Naive thymus-derived CD4-positive, alpha-beta T cell (primary cell): ENCODE measurements at regions of chr5 and their contacts with region 1.

Region 1: GRCh38 chr5:78886341-78887230 is 98.5 kb downstream of the ARSB start:
- DNase-seq: peak in 2 of 9 donors; percentile 6 to 7
- ATAC-seq: no peak
- H3K4me3 ChIP-seq: no peak overlapping the region
- H3K4me3 Mint-ChIP-seq: no peak overlapping the region
- H3K27ac ChIP-seq: no peak overlapping the region
- H3K27ac Mint-ChIP-seq: no peak overlapping the region
- H3K4me1 ChIP-seq: peaks cover 0 to 6% of the 10 kb centered on the region in 2 donors
- H3K4me1 Mint-ChIP-seq: peaks cover 3 to 21% (median 19%) of the 10 kb centered on the region in 7 donors
- H3K27me3 ChIP-seq: no peaks in the 10 kb centered on the region
- H3K27me3 Mint-ChIP-seq: no peaks in the 10 kb centered on the region

Region 2: GRCh38 chr5:78016863-78017529 is 869.6 kb before region 1 on chr5:
- CTCF ChIA-PET with region 1: no interaction called
- POLR2A ChIA-PET with region 1: no interaction called
- intact Hi-C with region 1: no loop called
- DNase-seq: no peak
- ATAC-seq: no peak
- H3K4me3 ChIP-seq: no peak overlapping the region
- H3K4me3 Mint-ChIP-seq: no peak overlapping the region
- H3K27ac ChIP-seq: no peak overlapping the region
- H3K27ac Mint-ChIP-seq: no peak overlapping the region
- H3K4me1 ChIP-seq: no peaks in the 10 kb centered on the region
- H3K4me1 Mint-ChIP-seq: no peaks in the 10 kb centered on the region
- H3K27me3 ChIP-seq: no peaks in the 10 kb centered on the region
- H3K27me3 Mint-ChIP-seq: no peaks in the 10 kb centered on the region

Region 3: GRCh38 chr5:79109527-79110492 is 223.2 kb after region 1 on chr5:
- CTCF ChIA-PET with region 1: no interaction called
- POLR2A ChIA-PET with region 1: no interaction called
- intact Hi-C with region 1: loop called in 1 of 2 experiments (anchors 5 kb)
- DNase-seq: peak in 3 of 9 donors; percentile 13 to 29 (median 27)
- ATAC-seq: peak; percentile 75
- H3K4me3 ChIP-seq: no peak overlapping the region
- H3K4me3 Mint-ChIP-seq: no peak overlapping the region
- H3K27ac ChIP-seq: no peak overlapping the region
- H3K27ac Mint-ChIP-seq: no peak overlapping the region
- H3K4me1 ChIP-seq: no peaks in the 10 kb centered on the region
- H3K4me1 Mint-ChIP-seq: peaks cover 0 to 8% (median 0%) of the 10 kb centered on the region in 7 donors
- H3K27me3 ChIP-seq: peaks cover 0 to 8% of the 10 kb centered on the region in 2 donors
- H3K27me3 Mint-ChIP-seq: peaks cover 53 to 80% (median 59%) of the 10 kb centered on the region in 5 donors

Region 4: DNA sequence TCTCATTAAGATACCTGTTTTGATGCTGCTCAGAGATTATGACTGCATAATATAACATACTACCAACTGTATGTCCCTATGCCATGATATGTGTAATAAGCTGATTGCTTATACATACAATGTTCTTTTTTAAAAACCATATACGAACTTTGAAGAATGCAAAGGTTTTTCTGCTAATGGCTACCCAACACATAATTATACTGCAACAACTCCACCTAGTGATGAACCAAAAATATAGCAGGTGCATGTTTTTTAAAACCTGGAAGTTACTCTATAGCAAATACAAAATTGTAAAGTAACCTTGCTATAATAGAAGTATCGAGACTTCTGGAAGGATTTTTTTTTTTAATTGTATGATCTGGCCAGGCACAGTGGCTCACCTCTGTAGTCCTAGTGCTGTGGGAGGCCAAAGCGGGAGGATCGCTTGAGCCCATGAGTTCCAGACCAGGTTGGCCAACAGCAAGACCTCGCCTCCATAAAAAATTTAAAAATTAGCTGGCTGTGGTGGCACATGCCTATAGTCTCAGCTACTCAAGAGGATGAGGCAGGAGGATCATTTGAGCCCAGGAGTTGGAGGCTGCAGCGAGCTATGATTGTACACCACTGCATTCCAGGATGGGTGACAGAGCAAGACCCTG is 578.2 kb after region 1 on chr5:
- CTCF ChIA-PET with region 1: no interaction called
- POLR2A ChIA-PET with region 1: no interaction called
- intact Hi-C with region 1: loop called in 1 of 2 experiments (anchors 10 kb)
- DNase-seq: peak in 5 of 9 donors; percentile 12 to 34 (median 32)
- ATAC-seq: peak; percentile 54
- H3K4me3 ChIP-seq: no peak overlapping the region
- H3K4me3 Mint-ChIP-seq: no peak overlapping the region
- H3K27ac ChIP-seq: no peak overlapping the region
- H3K27ac Mint-ChIP-seq: no peak overlapping the region
- H3K4me1 ChIP-seq: no peaks in the 10 kb centered on the region
- H3K4me1 Mint-ChIP-seq: peaks cover 0 to 2% (median 0%) of the 10 kb centered on the region in 7 donors
- H3K27me3 ChIP-seq: no peaks in the 10 kb centered on the region
- H3K27me3 Mint-ChIP-seq: peaks cover 0 to 9% (median 5%) of the 10 kb centered on the region in 5 donors